ENCODE measurements at regions of chr1 and their contacts with region 1.

Region 1: GRCh38 chr1:184075055-184076029 is 23.8 kb downstream of the TSEN15 start:
- DNase-seq: peak; percentile 30 to 58 (median 49)
- H3K4me3 ChIP-seq: no peak overlapping the region
- H3K4me3 Mint-ChIP-seq: no peak overlapping the region
- H3K27ac ChIP-seq: no peak overlapping the region
- H3K27ac Mint-ChIP-seq: no peak overlapping the region
- H3K4me1 ChIP-seq: no peaks in the 10 kb centered on the region
- H3K4me1 Mint-ChIP-seq: no peaks in the 10 kb centered on the region
- H3K27me3 ChIP-seq: no peaks in the 10 kb centered on the region
- H3K27me3 Mint-ChIP-seq: no peaks in the 10 kb centered on the region
- CTCF ChIP-seq: peak; percentile 83

Region 2: DNA sequence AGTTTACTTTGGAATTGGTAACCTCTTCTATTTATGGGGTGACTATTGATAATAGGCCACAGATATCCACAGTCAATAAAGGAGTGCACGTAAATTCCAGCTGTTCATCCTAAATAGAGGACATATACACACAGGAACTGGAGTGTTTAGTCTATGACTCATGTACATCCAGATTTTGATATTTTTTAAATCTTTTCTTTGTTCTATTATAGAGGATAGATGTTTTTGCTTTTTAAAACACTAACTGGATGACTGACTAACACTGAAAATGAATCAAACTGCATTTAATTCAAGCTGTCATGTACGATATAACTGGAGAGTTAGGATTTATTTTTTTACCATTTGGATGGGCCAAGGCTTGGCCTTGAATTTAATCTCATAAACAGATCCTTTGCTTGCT is 224.5 kb before region 1 on chr1:
- intact Hi-C with region 1: no loop called
- DNase-seq: no peak
- H3K4me3 ChIP-seq: no peak overlapping the region
- H3K4me3 Mint-ChIP-seq: no peak overlapping the region
- H3K27ac ChIP-seq: no peak overlapping the region
- H3K27ac Mint-ChIP-seq: no peak overlapping the region
- H3K4me1 ChIP-seq: no peaks in the 10 kb centered on the region
- H3K4me1 Mint-ChIP-seq: no peaks in the 10 kb centered on the region
- H3K27me3 ChIP-seq: no peaks in the 10 kb centered on the region
- H3K27me3 Mint-ChIP-seq: peaks cover 1 to 3% (median 1%) of the 10 kb centered on the region in 3 donors
- CTCF ChIP-seq: no peak

Region 3: DNA sequence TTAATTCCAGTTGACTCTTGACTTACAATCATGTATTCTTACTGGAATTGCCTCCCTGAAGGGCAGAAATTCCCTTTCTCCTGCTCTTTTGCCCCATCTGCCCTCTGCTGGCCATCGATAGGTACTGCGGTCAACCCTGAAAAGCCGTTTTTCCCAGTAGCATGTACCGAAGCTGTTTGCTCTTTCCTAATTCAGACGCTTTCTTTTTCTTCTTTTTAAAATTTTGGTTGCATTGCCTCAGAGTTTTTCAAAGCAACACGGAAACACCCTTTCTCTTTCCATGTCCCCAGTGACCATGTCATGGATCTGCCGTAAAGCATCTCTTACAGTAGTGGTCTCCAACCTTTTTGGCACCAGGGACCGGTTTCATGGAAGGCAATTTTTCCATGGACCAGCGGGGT is 147.3 kb after region 1 on chr1:
- intact Hi-C with region 1: loop called (anchors 2 kb)
- DNase-seq: peak; percentile 27 to 59 (median 46)
- H3K4me3 ChIP-seq: no peak overlapping the region
- H3K4me3 Mint-ChIP-seq: peak overlapping the region; percentile 26 to 65
- H3K27ac ChIP-seq: no peak overlapping the region
- H3K27ac Mint-ChIP-seq: no peak overlapping the region
- H3K4me1 ChIP-seq: no peaks in the 10 kb centered on the region
- H3K4me1 Mint-ChIP-seq: peaks cover 6% of the 10 kb centered on the region
- H3K27me3 ChIP-seq: no peaks in the 10 kb centered on the region
- H3K27me3 Mint-ChIP-seq: peaks cover 0 to 1% (median 0%) of the 10 kb centered on the region in 3 donors
- CTCF ChIP-seq: peak; percentile 97

Region 4: GRCh38 chr1:184664042-184664655 is 588.8 kb after region 1 on chr1:
- intact Hi-C with region 1: loop called (anchors 2 to 5 kb)
- DNase-seq: peak; percentile 27 to 56 (median 49)
- H3K4me3 ChIP-seq: peak overlapping the region in 2 of 3 experiments; percentile 7 to 43
- H3K4me3 Mint-ChIP-seq: peak overlapping the region; percentile 73 to 92
- H3K27ac ChIP-seq: no peak overlapping the region
- H3K27ac Mint-ChIP-seq: peak overlapping the region in 2 of 7 donors; percentile 40 to 66
- H3K4me1 ChIP-seq: peaks cover 9% of the 10 kb centered on the region in 2 donors
- H3K4me1 Mint-ChIP-seq: peaks cover 11% of the 10 kb centered on the region
- H3K27me3 ChIP-seq: no peaks in the 10 kb centered on the region
- H3K27me3 Mint-ChIP-seq: peaks cover 0 to 7% (median 3%) of the 10 kb centered on the region in 3 donors
- CTCF ChIP-seq: peak; percentile 98